CD14-positive monocyte (primary cell): ENCODE measurements at regions of chr2 and their contacts with region 1.

Region 1: DNA sequence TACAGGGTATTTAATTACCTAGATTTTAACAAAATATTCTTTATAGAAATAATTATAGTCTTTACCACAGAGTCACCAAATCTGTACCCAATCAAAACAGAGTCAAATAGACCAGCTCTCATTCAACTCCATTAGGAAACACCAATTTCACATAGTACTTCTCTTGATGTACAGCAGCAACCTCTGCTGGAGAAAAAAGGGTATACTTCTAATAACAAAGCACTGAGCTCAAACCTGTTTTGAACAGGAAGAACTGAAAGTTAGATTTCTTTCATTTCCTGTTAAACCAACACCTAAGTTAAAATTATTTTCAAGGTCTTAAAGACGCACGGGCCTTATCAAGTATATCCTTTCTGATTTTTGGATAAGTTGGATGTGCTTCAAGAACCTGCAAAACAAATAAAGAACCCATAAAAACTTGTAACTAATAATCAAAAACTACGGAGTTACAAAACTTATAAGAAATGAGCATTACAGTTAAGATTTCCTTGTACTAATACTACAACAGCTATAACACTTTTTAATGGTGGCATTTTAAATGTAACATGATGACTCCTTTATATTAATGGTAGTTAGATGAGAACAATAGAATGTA is 79.0 kb downstream of the TTC21B start:
- DNase-seq: peak; percentile 44 to 71 (median 60)
- H3K4me3 ChIP-seq: no peak overlapping the region
- H3K4me3 Mint-ChIP-seq: no peak overlapping the region
- H3K27ac ChIP-seq: no peak overlapping the region
- H3K27ac Mint-ChIP-seq: peak overlapping the region in 1 of 7 donors; percentile 10
- H3K4me1 ChIP-seq: peaks cover 20 to 33% of the 10 kb centered on the region in 2 donors
- H3K4me1 Mint-ChIP-seq: peaks cover 26% of the 10 kb centered on the region
- H3K27me3 ChIP-seq: no peaks in the 10 kb centered on the region
- H3K27me3 Mint-ChIP-seq: no peaks in the 10 kb centered on the region
- CTCF ChIP-seq: peak; percentile 84

Region 2: DNA sequence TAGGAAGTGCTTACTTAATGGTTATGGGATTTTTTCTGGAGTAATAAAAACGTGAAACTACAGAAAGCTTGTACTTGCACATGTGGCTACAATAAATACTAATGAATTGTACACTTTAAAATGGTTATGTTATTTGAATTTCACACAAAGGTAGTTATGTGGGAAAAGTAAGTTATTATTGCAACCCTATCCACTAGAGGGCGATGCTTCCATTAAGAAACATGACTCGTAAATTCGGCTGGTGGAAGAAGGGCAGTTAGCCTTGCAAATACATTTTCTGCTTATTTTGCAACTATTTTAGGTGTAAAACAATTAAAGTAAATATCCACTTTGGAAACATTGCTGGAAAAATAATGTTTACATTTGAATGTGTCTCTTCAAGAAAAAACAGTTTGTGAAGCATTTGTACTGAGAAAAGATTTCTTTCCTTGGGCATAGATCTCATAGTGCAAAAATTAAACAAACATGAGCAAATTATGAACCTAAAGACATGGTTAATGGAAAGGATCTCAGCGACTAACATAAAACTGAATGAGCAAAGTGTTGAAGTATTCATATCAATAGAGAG is 473.2 kb before region 1 on chr2:
- intact Hi-C with region 1: loop called (anchors 5 kb)
- DNase-seq: peak; percentile 23 to 48 (median 37)
- H3K4me3 ChIP-seq: no peak overlapping the region
- H3K4me3 Mint-ChIP-seq: no peak overlapping the region
- H3K27ac ChIP-seq: no peak overlapping the region
- H3K27ac Mint-ChIP-seq: no peak overlapping the region
- H3K4me1 ChIP-seq: no peaks in the 10 kb centered on the region
- H3K4me1 Mint-ChIP-seq: no peaks in the 10 kb centered on the region
- H3K27me3 ChIP-seq: no peaks in the 10 kb centered on the region
- H3K27me3 Mint-ChIP-seq: peaks cover 2 to 5% (median 2%) of the 10 kb centered on the region in 3 donors
- CTCF ChIP-seq: peak; percentile 73

Region 3: GRCh38 chr2:165794536-165794928 is 80.0 kb before region 1 on chr2:
- intact Hi-C with region 1: loop called in 1 of 2 experiments (anchors 5 kb)
- DNase-seq: peak; percentile 77 to 87 (median 85)
- H3K4me3 ChIP-seq: peak overlapping the region; percentile 77 to 89 (median 87)
- H3K4me3 Mint-ChIP-seq: peak overlapping the region; percentile 98 to 99
- H3K27ac ChIP-seq: peak overlapping the region; percentile 79 to 88
- H3K27ac Mint-ChIP-seq: peak overlapping the region; percentile 92 to 98 (median 96)
- H3K4me1 ChIP-seq: peaks cover 23 to 26% of the 10 kb centered on the region in 2 donors
- H3K4me1 Mint-ChIP-seq: peaks cover 53% of the 10 kb centered on the region
- H3K27me3 ChIP-seq: no peaks in the 10 kb centered on the region
- H3K27me3 Mint-ChIP-seq: no peaks in the 10 kb centered on the region
- CTCF ChIP-seq: no peak

Region 4: DNA sequence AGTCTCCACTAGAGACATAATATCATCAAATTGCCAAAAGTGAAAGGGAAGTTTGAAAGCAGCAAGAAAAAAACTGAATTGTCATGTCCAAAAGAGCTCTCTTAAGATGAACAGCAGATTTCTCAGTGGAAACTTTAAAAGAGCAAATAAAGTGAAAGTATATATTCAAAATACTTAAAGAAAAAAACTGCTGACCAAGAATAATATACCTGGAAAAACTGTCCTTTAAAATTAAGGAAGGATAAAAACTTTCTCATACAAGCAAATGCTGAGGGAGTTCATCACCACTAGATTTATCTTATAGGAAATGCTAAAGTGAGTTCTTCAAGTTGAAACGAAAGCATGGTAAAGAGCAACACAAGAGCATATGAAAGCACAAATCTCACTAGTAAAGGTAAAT is 336.5 kb after region 1 on chr2:
- intact Hi-C with region 1: no loop called
- DNase-seq: no peak
- H3K4me3 ChIP-seq: no peak overlapping the region
- H3K4me3 Mint-ChIP-seq: no peak overlapping the region
- H3K27ac ChIP-seq: no peak overlapping the region
- H3K27ac Mint-ChIP-seq: no peak overlapping the region
- H3K4me1 ChIP-seq: no peaks in the 10 kb centered on the region
- H3K4me1 Mint-ChIP-seq: no peaks in the 10 kb centered on the region
- H3K27me3 ChIP-seq: no peaks in the 10 kb centered on the region
- H3K27me3 Mint-ChIP-seq: no peaks in the 10 kb centered on the region
- CTCF ChIP-seq: no peak